ENCODE measurements at regions of chr4 and their contacts with region 1.

Region 1: DNA sequence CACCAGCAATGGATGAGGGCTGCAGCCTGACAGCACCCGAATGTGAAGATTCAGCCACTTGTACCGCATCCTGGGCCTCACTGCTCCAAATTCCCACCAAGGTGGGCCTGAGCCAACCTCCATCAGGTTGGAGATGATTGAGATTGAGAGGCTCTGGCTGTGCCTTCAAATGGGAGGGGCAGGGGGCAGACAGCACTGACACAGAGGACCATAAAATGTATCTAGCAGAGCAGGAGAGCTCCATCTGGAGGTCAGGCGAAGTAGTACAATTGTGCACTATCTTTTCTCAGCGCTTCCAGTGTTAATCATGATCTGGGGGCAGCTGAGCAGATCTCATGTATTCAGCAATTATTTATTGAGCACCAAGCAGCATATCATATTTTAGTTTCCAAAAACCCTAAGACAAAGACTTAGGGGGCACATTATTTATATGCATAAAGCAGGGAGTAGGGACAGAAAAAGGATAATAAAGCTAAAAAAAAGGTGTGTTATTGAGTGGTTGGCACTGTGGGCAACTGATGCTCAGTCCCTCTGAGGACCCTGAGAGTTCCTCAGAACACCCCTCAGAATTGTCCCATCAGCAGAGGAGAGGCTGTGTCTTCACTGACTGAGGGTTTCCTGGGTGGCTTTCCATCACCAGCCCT is 31.6 kb upstream of the C1QTNF7 start:
- DNase-seq: peak; percentile 67
- H3K4me3 Mint-ChIP-seq: no peak overlapping the region
- H3K27ac Mint-ChIP-seq: no peak overlapping the region
- H3K4me1 Mint-ChIP-seq: peaks cover 17% of the 10 kb centered on the region
- H3K27me3 Mint-ChIP-seq: no peaks in the 10 kb centered on the region

Region 2: GRCh38 chr4:15238720-15239119 is 157.6 kb before region 1 on chr4:
- CTCF ChIA-PET with region 1: interaction called, 48 read pairs
- POLR2A ChIA-PET with region 1: no interaction called
- intact Hi-C with region 1: loop called (anchors 1 kb)
- DNase-seq: peak; percentile 50
- H3K4me3 Mint-ChIP-seq: no peak overlapping the region
- H3K27ac Mint-ChIP-seq: no peak overlapping the region
- H3K4me1 Mint-ChIP-seq: peaks cover 11% of the 10 kb centered on the region
- H3K27me3 Mint-ChIP-seq: no peaks in the 10 kb centered on the region

Region 3: DNA sequence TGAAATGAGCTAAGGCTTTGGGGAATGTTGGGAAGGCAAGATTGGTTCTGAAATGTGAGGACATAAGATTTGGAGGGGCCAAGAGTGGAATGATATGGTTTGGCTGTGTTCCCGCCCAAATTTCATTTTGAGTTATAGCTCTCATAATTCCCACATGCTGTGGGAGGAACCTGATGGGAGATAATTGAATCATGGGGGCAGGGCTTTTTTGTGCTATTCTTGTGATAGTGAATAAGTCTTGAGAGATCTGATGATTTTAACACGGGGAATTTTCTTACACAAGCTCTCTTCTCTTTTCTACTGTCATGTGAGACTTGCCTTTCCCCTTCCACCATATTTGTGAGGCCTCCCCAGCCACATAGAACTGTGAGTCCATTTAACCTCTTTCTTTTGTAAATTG is 126.1 kb before region 1 on chr4:
- CTCF ChIA-PET with region 1: no interaction called
- POLR2A ChIA-PET with region 1: no interaction called
- intact Hi-C with region 1: no loop called
- DNase-seq: no peak
- H3K4me3 Mint-ChIP-seq: no peak overlapping the region
- H3K27ac Mint-ChIP-seq: no peak overlapping the region
- H3K4me1 Mint-ChIP-seq: no peaks in the 10 kb centered on the region
- H3K27me3 Mint-ChIP-seq: peaks cover 10% of the 10 kb centered on the region

Region 4: GRCh38 chr4:15385928-15386327 is 10.4 kb before region 1 on chr4:
- CTCF ChIA-PET with region 1: interaction called, 19 read pairs
- POLR2A ChIA-PET with region 1: no interaction called
- intact Hi-C with region 1: no loop called
- DNase-seq: no peak
- H3K4me3 Mint-ChIP-seq: no peak overlapping the region
- H3K27ac Mint-ChIP-seq: no peak overlapping the region
- H3K4me1 Mint-ChIP-seq: no peaks in the 10 kb centered on the region
- H3K27me3 Mint-ChIP-seq: no peaks in the 10 kb centered on the region

Region 5: DNA sequence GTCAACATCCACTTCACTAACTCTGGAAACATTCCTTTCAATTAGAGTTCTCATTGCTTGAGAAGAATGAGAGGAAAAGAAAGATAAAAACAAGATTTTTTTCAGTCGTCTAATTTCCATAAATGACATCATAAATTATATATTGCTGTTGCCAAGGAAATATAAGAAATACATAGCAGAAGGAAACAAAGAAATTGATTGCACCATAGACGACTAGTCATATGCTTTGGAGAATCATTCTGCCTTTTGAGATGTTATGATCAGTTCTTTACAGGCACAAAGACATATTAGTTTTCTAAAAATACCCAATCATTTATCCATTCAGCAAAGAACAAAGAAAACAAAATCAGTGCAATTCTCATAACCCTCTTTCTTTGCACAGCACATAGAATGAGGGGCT is 30.9 kb after region 1 on chr4:
- CTCF ChIA-PET with region 1: interaction called, 15 read pairs
- POLR2A ChIA-PET with region 1: no interaction called
- intact Hi-C with region 1: loop called (anchors 1 kb)
- DNase-seq: no peak
- H3K4me3 Mint-ChIP-seq: no peak overlapping the region
- H3K27ac Mint-ChIP-seq: no peak overlapping the region
- H3K4me1 Mint-ChIP-seq: peaks cover 32% of the 10 kb centered on the region
- H3K27me3 Mint-ChIP-seq: peaks cover 1% of the 10 kb centered on the region

Region 6: GRCh38 chr4:15638418-15638817 is 242.1 kb after region 1 on chr4:
- CTCF ChIA-PET with region 1: no interaction called
- POLR2A ChIA-PET with region 1: no interaction called
- intact Hi-C with region 1: no loop called
- DNase-seq: no peak
- H3K4me3 Mint-ChIP-seq: no peak overlapping the region
- H3K27ac Mint-ChIP-seq: no peak overlapping the region
- H3K4me1 Mint-ChIP-seq: peaks cover 7% of the 10 kb centered on the region
- H3K27me3 Mint-ChIP-seq: no peaks in the 10 kb centered on the region

Region 7: DNA sequence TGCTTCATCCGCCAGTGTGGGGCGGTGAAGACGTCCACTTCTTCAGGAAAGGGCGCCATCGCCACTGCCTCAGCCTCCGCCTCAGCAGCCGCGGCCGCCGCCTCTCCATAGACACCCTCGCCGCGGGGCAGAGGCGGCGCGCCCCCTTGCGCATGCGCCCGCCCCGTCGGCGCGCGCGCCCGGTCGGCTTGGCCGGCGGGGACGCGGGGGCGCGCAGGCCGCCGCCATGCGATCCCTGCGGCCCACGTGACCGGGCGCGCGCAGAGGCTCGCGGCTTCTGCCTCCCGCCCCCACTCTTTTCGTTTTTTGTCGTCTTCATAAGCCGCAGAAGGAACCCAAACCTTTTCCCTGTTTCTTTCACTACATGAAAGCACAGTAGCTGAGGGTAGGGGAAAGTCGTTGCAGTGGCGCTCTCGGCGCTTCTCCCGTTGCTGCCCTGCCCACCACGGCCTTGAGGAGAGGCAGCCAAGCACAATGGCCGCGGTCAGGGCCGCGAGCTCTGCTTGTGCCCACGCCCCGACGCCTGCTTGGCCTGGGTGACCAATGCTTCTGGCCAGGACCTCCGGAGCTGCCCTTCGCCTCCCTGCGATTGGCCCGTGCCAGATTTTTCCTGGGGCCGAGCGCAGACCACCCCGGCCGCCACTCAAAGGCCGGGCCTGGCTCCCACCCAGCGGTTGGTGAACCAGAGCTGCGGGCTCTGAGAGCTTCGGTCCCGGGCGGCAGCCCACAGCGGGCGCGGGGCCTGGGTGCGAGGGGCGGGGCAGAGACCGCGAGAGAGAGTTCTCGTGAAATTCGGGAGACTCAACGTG is 259.2 kb after region 1 on chr4 and contains the start of gene FBXL5:
- CTCF ChIA-PET with region 1: interaction called, 3 read pairs
- POLR2A ChIA-PET with region 1: no interaction called
- intact Hi-C with region 1: loop called (anchors 1 kb)
- DNase-seq: peak; percentile 89
- H3K4me3 Mint-ChIP-seq: peak within 1 kb of the TSS; percentile 93
- H3K27ac Mint-ChIP-seq: peak within 1 kb of the TSS; percentile 94
- H3K4me1 Mint-ChIP-seq: peaks cover 61% of the 10 kb centered on the region
- H3K27me3 Mint-ChIP-seq: no peaks in the 10 kb centered on the region
- total RNA-seq, gene FBXL5: 26.5 to 30.4 TPM